CD8-positive, alpha-beta T cell (primary cell): ENCODE measurements at regions of chr1 and their contacts with region 1.

Region 1: DNA sequence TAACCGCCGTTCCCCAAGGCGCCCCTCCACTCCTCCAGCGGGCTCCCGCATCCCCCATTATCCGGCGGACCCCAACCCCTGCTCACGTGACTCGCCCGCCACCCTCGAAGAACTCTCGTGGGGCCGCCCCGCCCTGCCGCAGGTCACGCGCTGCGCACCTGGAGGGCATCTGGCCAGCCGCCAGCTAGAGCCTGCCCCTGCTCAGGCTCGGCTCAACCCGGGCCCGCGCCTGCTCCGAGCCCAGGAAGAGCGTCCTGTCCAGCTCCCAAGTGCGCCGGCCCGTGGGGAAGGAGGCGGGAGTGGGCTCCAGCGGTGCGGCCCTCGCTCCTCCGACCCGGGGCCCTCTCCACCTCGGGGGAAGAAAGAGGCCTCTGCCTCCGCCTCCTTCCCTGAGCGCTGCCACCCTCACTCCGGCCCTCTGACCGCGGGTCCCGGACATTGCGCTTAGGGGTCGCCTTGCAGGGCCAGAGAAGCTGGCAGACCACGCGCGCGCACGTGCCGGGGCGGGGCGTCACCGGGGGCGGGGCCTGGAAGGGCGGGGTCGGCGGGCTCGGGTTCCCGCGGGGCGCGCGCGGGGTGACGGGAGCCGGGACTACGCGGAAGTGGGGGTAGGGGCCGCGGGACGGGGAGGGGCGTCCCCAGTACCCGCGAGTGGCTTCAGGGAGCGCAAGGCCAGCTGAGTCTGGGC is 28.4 kb downstream of the HMGN2 start:
- DNase-seq: peak; percentile 74 to 95 (median 89)
- ATAC-seq: peak; percentile 75
- H3K4me3 ChIP-seq: peak overlapping the region; percentile 67 to 96
- H3K4me3 Mint-ChIP-seq: peak overlapping the region; percentile 84
- H3K27ac ChIP-seq: peak overlapping the region; percentile 84 to 89
- H3K27ac Mint-ChIP-seq: peak overlapping the region; percentile 89
- H3K4me1 ChIP-seq: peaks cover 13% of the 10 kb centered on the region
- H3K4me1 Mint-ChIP-seq: peaks cover 15% of the 10 kb centered on the region
- H3K27me3 ChIP-seq: no peaks in the 10 kb centered on the region
- H3K27me3 Mint-ChIP-seq: no peaks in the 10 kb centered on the region
- CTCF ChIP-seq: peak; percentile 15

Region 2: GRCh38 chr1:26431979-26432695 is 68.5 kb before region 1 on chr1 and contains the start of gene DHDDS:
- CTCF ChIA-PET with region 1: no interaction called
- POLR2A ChIA-PET with region 1: no interaction called
- intact Hi-C with region 1: loop called (anchors 1 to 2 kb)
- DNase-seq: peak; percentile 96 to 99 (median 99)
- ATAC-seq: peak; percentile 96
- H3K4me3 ChIP-seq: peak within 1 kb of the TSS; percentile 72 to 78
- H3K4me3 Mint-ChIP-seq: peak within 1 kb of the TSS; percentile 95
- H3K27ac ChIP-seq: peak within 1 kb of the TSS; percentile 73 to 81
- H3K27ac Mint-ChIP-seq: peak within 1 kb of the TSS; percentile 96
- H3K4me1 ChIP-seq: peaks cover 20% of the 10 kb centered on the region
- H3K4me1 Mint-ChIP-seq: peaks cover 21% of the 10 kb centered on the region
- H3K27me3 ChIP-seq: no peaks in the 10 kb centered on the region
- H3K27me3 Mint-ChIP-seq: no peaks in the 10 kb centered on the region
- CTCF ChIP-seq: no peak
- total RNA-seq, gene DHDDS: 23.9 to 29.2 TPM

Region 3: DNA sequence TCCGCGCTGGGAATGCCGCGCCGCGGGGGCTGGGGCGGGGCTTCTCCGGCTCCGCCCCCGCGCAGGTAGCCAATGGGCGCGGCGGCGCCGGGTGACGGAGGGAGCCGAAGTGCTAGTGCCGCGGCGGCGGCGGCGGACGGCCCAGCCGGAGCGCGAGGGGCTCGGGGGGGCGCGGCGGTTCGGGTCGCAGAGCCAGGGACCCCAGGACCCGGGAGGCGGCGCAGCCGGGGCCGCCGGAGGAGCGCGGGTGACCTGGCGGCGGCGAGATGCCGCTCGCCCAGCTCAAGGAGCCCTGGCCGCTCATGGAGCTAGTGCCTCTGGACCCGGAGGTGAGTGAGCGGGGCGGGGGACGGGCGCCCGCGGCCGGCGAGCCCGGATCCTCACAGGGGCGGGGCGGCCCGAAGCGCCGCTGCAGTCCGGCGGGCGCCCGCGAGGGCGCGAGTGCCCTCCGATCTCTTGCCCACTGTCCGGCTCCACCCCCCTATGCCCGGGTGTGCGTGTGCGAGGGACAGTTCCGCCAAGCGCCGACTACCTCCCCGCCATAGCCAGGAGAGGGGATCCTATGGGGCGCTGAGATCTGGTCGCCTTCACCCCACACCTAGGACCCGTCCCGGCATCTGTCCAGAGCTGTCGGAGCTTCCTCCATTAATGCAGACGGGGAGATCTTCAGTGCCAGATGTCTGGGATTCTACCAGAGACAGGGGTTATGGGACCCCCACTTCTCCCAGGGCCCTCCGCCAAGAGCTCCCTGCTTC is 29.2 kb after region 1 on chr1 and contains the start of gene RPS6KA1:
- CTCF ChIA-PET with region 1: interaction called, 5 read pairs
- POLR2A ChIA-PET with region 1: interaction called, 15 read pairs
- intact Hi-C with region 1: loop called (anchors 1 kb)
- DNase-seq: peak in 8 of 9 experiments; percentile 45 to 83 (median 60)
- ATAC-seq: peak; percentile 94
- H3K4me3 ChIP-seq: peak within 1 kb of the TSS; percentile 60 to 84
- H3K4me3 Mint-ChIP-seq: peak within 1 kb of the TSS; percentile 89
- H3K27ac ChIP-seq: peak within 1 kb of the TSS in 1 of 2 experiments; percentile 37
- H3K27ac Mint-ChIP-seq: peak within 1 kb of the TSS; percentile 89
- H3K4me1 ChIP-seq: peaks cover 30% of the 10 kb centered on the region
- H3K4me1 Mint-ChIP-seq: peaks cover 34% of the 10 kb centered on the region
- H3K27me3 ChIP-seq: no peaks in the 10 kb centered on the region
- H3K27me3 Mint-ChIP-seq: no peaks in the 10 kb centered on the region
- CTCF ChIP-seq: no peak
- total RNA-seq, gene RPS6KA1: 25.8 to 30.3 TPM

Region 4: DNA sequence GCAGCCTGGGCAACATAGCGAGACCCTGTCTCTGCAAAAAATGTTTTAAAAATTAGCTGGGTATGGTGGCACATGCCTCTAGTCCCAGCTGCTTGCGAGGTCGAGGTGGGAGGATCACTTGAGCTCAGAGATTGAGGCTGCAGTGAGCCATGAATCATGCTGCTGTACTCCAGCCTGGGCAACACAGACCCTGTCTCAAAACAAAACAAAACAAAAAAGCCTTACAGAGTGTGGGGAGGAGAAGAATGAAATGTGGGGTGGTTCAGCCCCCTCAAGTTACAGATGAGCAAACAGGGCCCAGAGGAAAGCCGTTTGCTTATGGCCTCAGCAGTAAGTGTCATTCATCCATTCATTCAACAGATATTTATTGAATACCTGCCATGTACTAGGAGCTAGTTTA is 69.7 kb after region 1 on chr1:
- CTCF ChIA-PET with region 1: interaction called, 11 read pairs
- POLR2A ChIA-PET with region 1: interaction called, 3 read pairs
- intact Hi-C with region 1: no loop called
- DNase-seq: no peak
- ATAC-seq: no peak
- H3K4me3 ChIP-seq: no peak overlapping the region
- H3K4me3 Mint-ChIP-seq: no peak overlapping the region
- H3K27ac ChIP-seq: no peak overlapping the region
- H3K27ac Mint-ChIP-seq: no peak overlapping the region
- H3K4me1 ChIP-seq: no peaks in the 10 kb centered on the region
- H3K4me1 Mint-ChIP-seq: peaks cover 15% of the 10 kb centered on the region
- H3K27me3 ChIP-seq: no peaks in the 10 kb centered on the region
- H3K27me3 Mint-ChIP-seq: no peaks in the 10 kb centered on the region
- CTCF ChIP-seq: no peak

Region 5: DNA sequence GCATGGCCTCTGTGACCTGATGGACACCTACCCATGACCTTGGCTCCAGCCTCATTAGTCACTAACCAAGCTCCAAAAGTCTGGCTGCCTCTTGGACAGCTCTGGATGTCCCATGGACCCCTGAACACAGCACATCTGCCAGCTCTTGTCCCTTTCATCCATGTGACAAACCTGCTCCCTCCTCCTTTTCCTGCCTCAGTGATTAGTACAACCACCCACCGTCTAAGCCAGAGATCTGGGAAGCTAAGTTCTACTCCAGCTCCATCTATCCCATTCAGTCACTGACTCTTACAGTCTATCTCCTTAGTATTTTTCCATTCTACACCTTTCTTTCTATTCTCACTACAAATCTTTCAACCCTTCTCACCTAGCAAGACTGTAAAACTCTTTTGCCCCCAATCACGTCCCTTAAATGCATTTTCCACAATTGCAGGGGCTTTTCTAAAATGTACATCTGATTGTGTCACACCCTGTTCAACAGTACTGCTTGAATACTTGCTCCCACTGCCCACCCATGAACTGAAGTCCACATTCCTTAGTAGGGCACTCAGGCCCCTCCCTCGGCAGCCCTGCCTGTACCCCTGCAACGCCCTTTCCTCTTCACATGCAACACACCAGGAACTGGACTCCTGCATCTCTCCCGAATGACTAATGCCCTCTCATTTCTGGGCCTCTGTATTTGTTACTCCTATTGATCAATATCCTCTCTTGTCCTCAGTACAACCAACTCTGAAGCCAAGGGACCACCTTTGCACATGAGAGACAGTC is 382.2 kb after region 1 on chr1:
- CTCF ChIA-PET with region 1: no interaction called
- POLR2A ChIA-PET with region 1: no interaction called
- intact Hi-C with region 1: loop called in 1 of 2 experiments (anchors 2 kb)
- DNase-seq: no peak
- ATAC-seq: no peak
- H3K4me3 ChIP-seq: no peak overlapping the region
- H3K4me3 Mint-ChIP-seq: no peak overlapping the region
- H3K27ac ChIP-seq: no peak overlapping the region
- H3K27ac Mint-ChIP-seq: no peak overlapping the region
- H3K4me1 ChIP-seq: no peaks in the 10 kb centered on the region
- H3K4me1 Mint-ChIP-seq: peaks cover 18% of the 10 kb centered on the region
- H3K27me3 ChIP-seq: no peaks in the 10 kb centered on the region
- H3K27me3 Mint-ChIP-seq: no peaks in the 10 kb centered on the region
- CTCF ChIP-seq: no peak